ENCODE measurements at regions of chr15 and their contacts with region 1.

Region 1: DNA sequence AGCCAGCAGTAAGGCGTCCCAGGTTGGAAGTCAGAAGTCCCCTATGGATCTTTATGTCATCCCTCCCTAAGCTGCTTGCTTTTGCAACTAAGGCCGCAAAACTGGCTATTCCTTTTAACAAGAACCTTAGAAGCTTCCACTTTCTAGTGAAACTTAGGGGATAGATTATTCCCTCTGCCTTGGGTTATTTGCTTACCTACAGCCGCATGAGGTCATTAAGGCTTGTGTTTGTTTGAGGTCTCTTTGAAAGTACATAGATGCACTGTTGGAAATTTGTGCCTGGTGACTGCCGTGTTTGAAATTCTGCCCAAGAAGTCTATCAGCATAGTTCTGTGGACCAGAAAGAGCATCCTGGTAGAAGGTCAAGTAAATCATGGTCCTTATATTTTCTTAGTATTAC is 98.7 kb downstream of the PDE8A start:
- DNase-seq: no peak
- H3K4me3 ChIP-seq: no peak overlapping the region
- H3K27ac ChIP-seq: no peak overlapping the region
- H3K4me1 ChIP-seq: no peaks in the 10 kb centered on the region
- H3K27me3 ChIP-seq: no peaks in the 10 kb centered on the region
- CTCF ChIP-seq: no peak

Region 2: GRCh38 chr15:85024509-85025214 is 55.7 kb before region 1 on chr15:
- CTCF ChIA-PET with region 1: interaction called, 26 read pairs
- dilution Hi-C with region 1: no loop called
- in situ Hi-C with region 1: no loop called
- intact Hi-C with region 1: no loop called
- DNase-seq: peak; percentile 91
- H3K4me3 ChIP-seq: no peak overlapping the region
- H3K27ac ChIP-seq: no peak overlapping the region
- H3K4me1 ChIP-seq: peaks cover 16% of the 10 kb centered on the region
- H3K27me3 ChIP-seq: no peaks in the 10 kb centered on the region
- CTCF ChIP-seq: no peak